ENCODE measurements at regions of chr10 and their contacts with region 1.

Region 1: GRCh38 chr10:76984559-76985443 is 652.8 kb downstream of the KCNMA1 start:
- DNase-seq: peak; percentile 83
- H3K4me3 Mint-ChIP-seq: no peak overlapping the region
- H3K27ac Mint-ChIP-seq: no peak overlapping the region
- H3K4me1 Mint-ChIP-seq: no peaks in the 10 kb centered on the region
- H3K27me3 Mint-ChIP-seq: peaks cover 3% of the 10 kb centered on the region

Region 2: GRCh38 chr10:75401569-75402485 is 1583.0 kb before region 1 on chr10 and contains the start of gene ZNF503:
- CTCF ChIA-PET with region 1: no interaction called
- intact Hi-C with region 1: loop called (anchors 1 kb)
- DNase-seq: peak; percentile 67
- H3K4me3 Mint-ChIP-seq: peak within 1 kb of the TSS; percentile 77
- H3K27ac Mint-ChIP-seq: no peak within 1 kb of the TSS
- H3K4me1 Mint-ChIP-seq: peaks cover 25% of the 10 kb centered on the region
- H3K27me3 Mint-ChIP-seq: peaks cover 59% of the 10 kb centered on the region
- total RNA-seq, gene ZNF503: 0.07 to 0.21 TPM

Region 3: DNA sequence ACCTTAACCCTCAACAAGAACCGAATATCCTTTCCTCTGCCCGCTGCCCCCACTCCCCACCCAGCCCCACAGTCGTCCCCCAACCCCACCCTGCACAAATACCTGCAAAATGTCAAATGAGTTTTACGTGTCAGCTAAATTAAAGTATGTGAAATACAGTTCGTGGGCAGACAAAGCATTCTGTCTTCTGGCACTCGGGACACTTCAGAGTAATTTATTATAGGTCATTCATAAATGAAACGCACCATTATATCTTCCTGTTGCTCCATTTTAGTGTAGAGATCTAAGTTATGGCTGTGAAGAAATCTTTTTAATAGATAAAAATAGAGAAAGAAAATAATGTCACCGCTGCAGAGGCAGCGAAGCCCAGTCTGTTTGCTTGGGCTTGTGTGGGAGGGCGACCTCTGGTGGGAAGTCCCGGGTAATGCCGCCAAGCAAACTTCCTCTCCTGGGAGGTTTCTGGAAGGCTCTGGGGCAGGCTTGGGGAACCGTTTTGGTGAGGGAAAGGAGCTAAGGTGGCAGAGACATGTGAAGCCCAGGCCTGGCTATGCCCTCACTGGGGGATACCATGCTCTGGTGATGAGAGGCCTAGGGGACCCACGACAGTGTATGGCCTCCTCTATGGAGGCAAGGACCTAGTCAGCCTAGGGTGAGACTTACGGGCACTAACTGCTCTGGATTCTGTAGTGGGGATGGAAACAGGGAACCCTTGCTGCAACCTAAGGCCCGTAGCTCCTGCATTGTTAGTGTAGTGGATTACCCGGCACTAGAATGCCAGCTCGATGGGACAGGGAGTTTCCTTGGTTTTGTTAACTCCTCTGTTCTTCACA is 948.5 kb before region 1 on chr10:
- CTCF ChIA-PET with region 1: no interaction called
- intact Hi-C with region 1: loop called (anchors 10 kb)
- DNase-seq: peak; percentile 64
- H3K4me3 Mint-ChIP-seq: no peak overlapping the region
- H3K27ac Mint-ChIP-seq: no peak overlapping the region
- H3K4me1 Mint-ChIP-seq: no peaks in the 10 kb centered on the region
- H3K27me3 Mint-ChIP-seq: peaks cover 2% of the 10 kb centered on the region

Region 4: GRCh38 chr10:76547352-76547972 is 437.3 kb before region 1 on chr10:
- CTCF ChIA-PET with region 1: no interaction called
- intact Hi-C with region 1: loop called (anchors 10 kb)
- DNase-seq: peak; percentile 73
- H3K4me3 Mint-ChIP-seq: no peak overlapping the region
- H3K27ac Mint-ChIP-seq: no peak overlapping the region
- H3K4me1 Mint-ChIP-seq: no peaks in the 10 kb centered on the region
- H3K27me3 Mint-ChIP-seq: peaks cover 8% of the 10 kb centered on the region

Region 5: GRCh38 chr10:77111611-77112550 is 127.1 kb after region 1 on chr10:
- CTCF ChIA-PET with region 1: no interaction called
- intact Hi-C with region 1: loop called (anchors 5 kb)
- DNase-seq: peak; percentile 18
- H3K4me3 Mint-ChIP-seq: no peak overlapping the region
- H3K27ac Mint-ChIP-seq: no peak overlapping the region
- H3K4me1 Mint-ChIP-seq: no peaks in the 10 kb centered on the region
- H3K27me3 Mint-ChIP-seq: peaks cover 3% of the 10 kb centered on the region

Region 6: GRCh38 chr10:77139252-77140160 is 154.7 kb after region 1 on chr10:
- CTCF ChIA-PET with region 1: no interaction called
- intact Hi-C with region 1: no loop called
- DNase-seq: no peak
- H3K4me3 Mint-ChIP-seq: no peak overlapping the region
- H3K27ac Mint-ChIP-seq: no peak overlapping the region
- H3K4me1 Mint-ChIP-seq: no peaks in the 10 kb centered on the region
- H3K27me3 Mint-ChIP-seq: peaks cover 11% of the 10 kb centered on the region

Measured in activated naive CD4-positive, alpha-beta T cell treated with anti-CD3 and anti-CD28 coated beads for 36 hours (primary cell).